Mammary epithelial cell (primary cell): ENCODE measurements at regions of chr15 and their contacts with region 1.

Region 1: DNA sequence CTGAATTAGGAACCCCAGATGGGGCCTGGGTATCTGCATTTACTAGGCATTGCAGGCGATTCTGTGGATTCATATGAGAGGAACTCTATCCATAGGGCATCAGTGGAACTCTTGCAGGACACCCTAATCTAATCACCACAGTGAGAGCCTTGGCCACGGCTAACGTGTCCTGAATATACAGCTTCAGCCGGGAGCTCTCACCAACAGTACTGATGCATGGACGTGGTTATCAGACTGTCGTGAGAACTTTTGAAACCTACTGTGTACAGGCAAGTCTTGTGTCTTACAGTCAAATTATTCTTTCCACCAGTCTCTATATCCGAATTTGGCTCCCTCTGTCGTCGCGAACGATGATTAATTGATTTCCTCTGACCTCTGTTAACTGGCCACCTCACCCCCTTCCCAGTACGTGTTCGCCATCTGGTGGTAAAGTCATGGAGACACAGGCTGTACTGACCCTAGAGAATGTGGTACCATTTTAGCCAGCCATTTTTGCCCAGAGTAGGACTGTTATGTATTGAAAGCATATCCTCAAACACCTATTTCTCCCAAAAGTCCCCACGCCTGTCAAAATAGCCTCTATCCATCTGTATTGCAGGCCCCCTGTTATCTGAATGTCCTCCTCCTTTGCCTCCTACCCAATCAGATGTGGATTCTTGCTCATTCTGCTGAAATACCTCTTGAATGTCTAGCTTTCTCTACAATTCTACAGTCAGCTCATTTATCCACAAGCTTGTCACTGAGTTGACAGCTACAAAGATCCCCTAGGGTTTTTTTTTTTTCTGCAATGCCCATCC is 39.7 kb downstream of the GLDN start:
- DNase-seq: peak; percentile 61
- H3K4me3 ChIP-seq: no peak overlapping the region
- H3K27ac ChIP-seq: no peak overlapping the region
- H3K4me1 ChIP-seq: peaks cover 3% of the 10 kb centered on the region
- H3K27me3 ChIP-seq: no peaks in the 10 kb centered on the region
- CTCF ChIP-seq: peak; percentile 94

Region 2: DNA sequence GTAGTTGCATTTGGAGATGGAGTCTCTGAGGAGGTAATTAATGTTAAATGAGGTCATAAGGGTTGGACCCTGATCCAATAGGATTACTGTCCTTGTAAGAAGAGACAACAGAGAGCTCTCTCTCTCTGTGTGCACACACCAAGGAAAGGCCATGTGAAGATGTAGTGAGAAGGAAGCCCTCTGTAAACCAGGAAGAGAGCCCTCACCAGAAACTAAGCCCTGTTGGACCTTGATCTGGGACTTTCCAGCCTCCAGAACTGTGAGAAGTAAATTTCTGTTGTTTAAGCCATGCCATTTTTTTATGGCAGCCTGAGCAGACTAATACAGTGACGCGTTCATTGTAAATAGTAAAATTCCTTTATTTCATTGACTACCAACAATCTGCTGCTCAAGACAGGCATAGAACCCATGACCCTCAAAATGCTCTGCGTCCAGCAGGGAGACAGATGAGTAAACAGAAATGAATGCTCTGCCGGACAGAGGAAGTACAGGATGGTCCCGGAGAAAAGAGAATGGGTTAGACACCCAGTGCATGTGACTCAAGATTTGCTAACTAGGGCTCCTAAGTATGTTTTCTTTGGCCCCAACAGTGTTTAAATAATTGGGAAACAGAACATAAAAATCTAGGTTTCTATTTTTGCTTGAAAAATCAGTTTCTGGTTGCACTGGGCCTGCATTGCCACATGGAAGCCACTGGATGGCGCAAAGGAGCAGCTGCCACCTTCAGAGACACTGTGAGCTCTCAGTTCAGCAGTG is 248.6 kb before region 1 on chr15:
- CTCF ChIA-PET with region 1: no interaction called
- dilution Hi-C with region 1: no loop called
- in situ Hi-C with region 1: no loop called
- intact Hi-C with region 1: loop called (anchors 1 kb)
- DNase-seq: peak; percentile 72
- H3K4me3 ChIP-seq: no peak overlapping the region
- H3K27ac ChIP-seq: peak overlapping the region; percentile 6
- H3K4me1 ChIP-seq: peaks cover 33% of the 10 kb centered on the region
- H3K27me3 ChIP-seq: no peaks in the 10 kb centered on the region
- CTCF ChIP-seq: peak; percentile 93 to 97

Region 3: GRCh38 chr15:51192521-51193280 is 188.5 kb before region 1 on chr15:
- CTCF ChIA-PET with region 1: no interaction called
- dilution Hi-C with region 1: no loop called
- in situ Hi-C with region 1: no loop called
- intact Hi-C with region 1: loop called (anchors 1 kb)
- DNase-seq: peak; percentile 83
- H3K4me3 ChIP-seq: no peak overlapping the region
- H3K27ac ChIP-seq: no peak overlapping the region
- H3K4me1 ChIP-seq: peaks cover 29% of the 10 kb centered on the region
- H3K27me3 ChIP-seq: no peaks in the 10 kb centered on the region
- CTCF ChIP-seq: peak; percentile 75 to 96

Region 4: GRCh38 chr15:51229907-51230330 is 151.3 kb before region 1 on chr15:
- CTCF ChIA-PET with region 1: interaction called, 3 read pairs
- dilution Hi-C with region 1: no loop called
- in situ Hi-C with region 1: no loop called
- intact Hi-C with region 1: loop called (anchors 1 kb)
- DNase-seq: no peak
- H3K4me3 ChIP-seq: no peak overlapping the region
- H3K27ac ChIP-seq: no peak overlapping the region
- H3K4me1 ChIP-seq: peaks cover 21% of the 10 kb centered on the region
- H3K27me3 ChIP-seq: no peaks in the 10 kb centered on the region
- CTCF ChIP-seq: peak; percentile 13 to 33

Region 5: DNA sequence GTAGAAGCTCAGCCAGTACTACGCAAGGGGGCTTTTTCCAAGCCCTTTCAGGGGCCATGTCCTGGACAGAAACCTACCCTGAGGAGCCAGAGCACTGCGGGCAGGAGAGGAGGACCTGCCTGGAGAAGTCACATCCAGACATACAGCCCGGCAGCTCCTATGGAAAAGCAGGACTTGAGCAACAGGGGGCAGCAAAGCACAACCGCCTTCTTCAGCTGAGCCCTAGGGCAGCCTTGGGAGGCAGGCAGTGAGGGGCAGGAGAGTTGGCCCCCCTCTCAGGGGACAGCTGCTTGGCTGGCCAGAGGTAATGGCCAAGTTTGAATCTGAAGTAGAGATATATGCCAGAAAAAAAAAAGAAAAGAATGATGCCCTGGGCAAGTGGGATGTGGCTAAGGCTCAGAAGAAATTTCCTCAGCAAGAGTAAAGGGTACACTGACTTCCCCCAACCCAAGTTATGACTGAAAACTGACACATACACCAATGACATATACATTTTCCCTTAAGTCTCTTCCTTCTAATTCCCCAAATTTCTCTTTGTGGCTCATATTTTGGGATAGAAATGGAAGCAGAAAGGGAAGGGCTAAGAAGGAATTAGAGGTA is 99.7 kb before region 1 on chr15:
- CTCF ChIA-PET with region 1: interaction called, 6 read pairs
- dilution Hi-C with region 1: no loop called
- in situ Hi-C with region 1: loop called in 1 of 2 experiments (anchors 10 kb)
- intact Hi-C with region 1: loop called (anchors 1 kb)
- DNase-seq: peak; percentile 24
- H3K4me3 ChIP-seq: no peak overlapping the region
- H3K27ac ChIP-seq: no peak overlapping the region
- H3K4me1 ChIP-seq: no peaks in the 10 kb centered on the region
- H3K27me3 ChIP-seq: peaks cover 2% of the 10 kb centered on the region
- CTCF ChIP-seq: peak; percentile 47 to 72

Region 6: DNA sequence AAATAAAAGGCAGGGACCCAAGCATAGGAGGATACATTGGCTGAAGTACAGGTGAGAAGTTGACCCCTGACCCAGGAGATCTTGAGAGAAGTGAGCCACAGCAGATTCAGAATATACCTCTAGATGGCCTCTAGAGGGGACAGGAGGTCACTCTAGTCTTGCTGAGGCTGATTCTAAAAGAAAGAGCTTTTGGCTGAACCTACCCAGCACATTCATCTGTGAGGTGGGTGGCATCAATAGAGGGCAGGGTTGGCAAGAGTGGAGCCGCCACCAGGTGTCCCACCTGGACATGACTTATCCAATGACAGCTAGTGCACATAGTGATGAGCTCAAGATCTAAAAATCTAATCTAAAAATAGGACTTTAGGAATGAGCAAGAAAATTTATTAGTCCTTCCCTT is 94.4 kb before region 1 on chr15:
- CTCF ChIA-PET with region 1: interaction called, 6 read pairs
- dilution Hi-C with region 1: no loop called
- in situ Hi-C with region 1: loop called in 1 of 2 experiments (anchors 10 kb)
- intact Hi-C with region 1: loop called (anchors 1 kb)
- DNase-seq: no peak
- H3K4me3 ChIP-seq: no peak overlapping the region
- H3K27ac ChIP-seq: no peak overlapping the region
- H3K4me1 ChIP-seq: no peaks in the 10 kb centered on the region
- H3K27me3 ChIP-seq: no peaks in the 10 kb centered on the region
- CTCF ChIP-seq: peak; percentile 11 to 44

Region 7: DNA sequence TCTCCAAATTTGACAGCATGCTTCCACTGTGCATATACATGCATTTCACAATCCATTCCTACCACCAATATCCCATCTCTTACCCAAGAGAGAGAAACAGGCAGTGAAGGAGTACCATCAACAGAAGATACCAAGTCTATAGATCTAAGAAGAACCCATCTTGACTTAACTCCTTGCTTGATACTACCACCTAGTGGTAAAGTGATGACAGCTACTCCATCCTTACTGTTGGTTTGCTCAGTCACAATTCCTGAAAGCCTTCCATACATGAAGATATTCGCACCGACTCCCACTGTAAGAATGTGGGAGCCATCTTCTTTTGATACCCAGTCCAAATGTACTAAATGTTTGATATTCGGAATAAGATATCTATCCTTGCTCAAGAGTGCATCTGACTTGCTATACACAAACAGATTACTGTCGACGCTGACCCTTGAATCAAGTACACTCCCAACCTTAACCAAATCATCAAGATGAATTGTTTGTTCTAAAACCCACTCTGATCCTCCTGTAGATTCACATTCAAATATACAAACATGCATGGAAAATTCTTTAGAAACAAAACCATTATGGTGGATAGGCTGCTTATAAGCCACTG is 118.3 kb after region 1 on chr15:
- CTCF ChIA-PET with region 1: no interaction called
- dilution Hi-C with region 1: no loop called
- in situ Hi-C with region 1: no loop called
- intact Hi-C with region 1: loop called (anchors 1 kb)
- DNase-seq: peak; percentile 48
- H3K4me3 ChIP-seq: no peak overlapping the region
- H3K27ac ChIP-seq: no peak overlapping the region
- H3K4me1 ChIP-seq: no peaks in the 10 kb centered on the region
- H3K27me3 ChIP-seq: no peaks in the 10 kb centered on the region
- CTCF ChIP-seq: peak; percentile 80 to 87